ENCODE measurements at regions of chr13 and their contacts with region 1.

Region 1: GRCh38 chr13:38883783-38884182 is 106.8 kb downstream of the STOML3 start:
- H3K4me3 ChIP-seq: no peak overlapping the region
- H3K27ac ChIP-seq: no peak overlapping the region
- H3K4me1 ChIP-seq: peaks cover 3% of the 10 kb centered on the region; the same call in 1 of the 2 replicates
- CTCF ChIP-seq: no peak

Region 2: GRCh38 chr13:38872693-38873092 is 11.1 kb before region 1 on chr13:
- CTCF ChIA-PET with region 1: interaction called, 21 read pairs
- POLR2A ChIA-PET with region 1: no interaction called
- H3K4me3 ChIP-seq: no peak overlapping the region
- H3K27ac ChIP-seq: no peak overlapping the region
- H3K4me1 ChIP-seq: no peaks in the 10 kb centered on the region
- CTCF ChIP-seq: no peak